ENCODE measurements at regions of chr2 and their contacts with region 1.

Region 1: DNA sequence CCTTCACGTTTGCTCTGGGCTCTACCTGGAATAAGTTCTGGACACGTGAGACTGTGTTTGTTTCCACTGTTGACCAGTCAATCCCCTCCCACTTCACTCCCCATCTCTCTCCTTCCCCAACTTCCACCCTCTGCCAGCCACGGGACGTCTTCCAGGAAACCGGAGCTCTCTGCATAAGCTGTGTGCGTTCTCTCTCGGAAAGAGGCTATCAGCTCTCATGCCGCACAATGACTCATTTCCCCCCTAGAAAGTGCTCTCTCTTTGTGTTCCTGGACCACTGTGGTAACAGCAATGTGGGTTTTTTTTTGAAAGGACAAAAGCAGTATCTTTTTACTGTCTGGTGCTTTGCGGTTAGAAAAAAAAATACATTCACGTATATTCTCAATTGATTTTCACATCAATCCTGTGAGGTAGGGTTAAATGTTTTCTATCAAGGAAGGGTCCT is 10.2 kb downstream of the PROKR1 start:
- DNase-seq: peak; percentile 56
- H3K4me3 Mint-ChIP-seq: peak overlapping the region; percentile 35
- H3K27ac Mint-ChIP-seq: peak overlapping the region; percentile 42
- H3K4me1 Mint-ChIP-seq: peaks cover 49% of the 10 kb centered on the region
- H3K27me3 Mint-ChIP-seq: peaks cover 37% of the 10 kb centered on the region

Region 2: GRCh38 chr2:68385220-68385906 is 268.2 kb before region 1 on chr2:
- intact Hi-C with region 1: loop called (anchors 5 kb)
- DNase-seq: no peak
- H3K4me3 Mint-ChIP-seq: no peak overlapping the region
- H3K27ac Mint-ChIP-seq: no peak overlapping the region
- H3K4me1 Mint-ChIP-seq: peaks cover 36% of the 10 kb centered on the region
- H3K27me3 Mint-ChIP-seq: peaks cover 18% of the 10 kb centered on the region

Region 3: GRCh38 chr2:68521037-68521436 is 132.5 kb before region 1 on chr2:
- intact Hi-C with region 1: loop called (anchors 1 kb)
- DNase-seq: no peak
- H3K4me3 Mint-ChIP-seq: no peak overlapping the region
- H3K27ac Mint-ChIP-seq: peak overlapping the region; percentile 27
- H3K4me1 Mint-ChIP-seq: peaks cover 22% of the 10 kb centered on the region
- H3K27me3 Mint-ChIP-seq: no peaks in the 10 kb centered on the region

Region 4: GRCh38 chr2:68689553-68690537 is 36.3 kb after region 1 on chr2:
- intact Hi-C with region 1: loop called (anchors 2 kb)
- DNase-seq: no peak
- H3K4me3 Mint-ChIP-seq: no peak overlapping the region
- H3K27ac Mint-ChIP-seq: peak overlapping the region; percentile 67
- H3K4me1 Mint-ChIP-seq: peaks cover 20% of the 10 kb centered on the region
- H3K27me3 Mint-ChIP-seq: peaks cover 14% of the 10 kb centered on the region

Region 5: GRCh38 chr2:68766376-68766845 is 112.9 kb after region 1 on chr2:
- intact Hi-C with region 1: loop called (anchors 5 kb)
- DNase-seq: peak; percentile 70
- H3K4me3 Mint-ChIP-seq: peak overlapping the region; percentile 68
- H3K27ac Mint-ChIP-seq: peak overlapping the region; percentile 93
- H3K4me1 Mint-ChIP-seq: peaks cover 91% of the 10 kb centered on the region
- H3K27me3 Mint-ChIP-seq: no peaks in the 10 kb centered on the region

Region 6: DNA sequence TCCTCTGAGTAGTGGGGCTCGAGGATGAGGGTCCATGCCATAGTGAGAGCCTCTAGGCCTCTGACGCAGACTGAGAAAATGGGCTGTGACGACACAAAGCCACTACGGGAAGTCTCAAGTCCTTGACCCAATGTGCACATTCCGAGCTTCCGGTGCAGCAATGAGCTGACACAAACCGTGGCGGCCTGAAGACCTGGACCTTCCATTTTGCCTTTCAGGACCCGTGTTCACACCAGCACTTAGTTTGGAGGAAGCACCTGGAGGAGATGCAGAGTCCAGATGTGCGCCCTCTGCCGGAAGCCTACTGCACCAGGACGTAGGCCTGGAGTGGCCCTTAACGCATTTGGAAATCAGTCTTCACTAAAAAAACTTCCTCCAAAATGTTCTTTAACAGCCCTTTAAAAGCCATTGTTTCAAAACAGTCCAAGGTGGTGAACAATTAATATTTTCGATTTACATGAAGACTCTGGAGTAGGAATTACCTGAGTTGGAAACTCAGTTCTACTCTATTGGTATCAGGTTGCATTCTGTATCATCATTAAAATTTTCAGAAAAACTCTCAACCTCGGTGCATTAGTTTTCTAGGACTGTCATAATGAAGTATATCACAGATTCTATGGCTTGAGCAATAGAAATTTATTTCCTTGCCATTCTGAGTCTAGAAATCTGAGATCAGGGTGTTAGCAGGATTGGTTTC is 183.8 kb after region 1 on chr2:
- intact Hi-C with region 1: loop called (anchors 5 kb)
- DNase-seq: peak; percentile 43
- H3K4me3 Mint-ChIP-seq: no peak overlapping the region
- H3K27ac Mint-ChIP-seq: peak overlapping the region; percentile 78
- H3K4me1 Mint-ChIP-seq: peaks cover 49% of the 10 kb centered on the region
- H3K27me3 Mint-ChIP-seq: no peaks in the 10 kb centered on the region

Region 7: DNA sequence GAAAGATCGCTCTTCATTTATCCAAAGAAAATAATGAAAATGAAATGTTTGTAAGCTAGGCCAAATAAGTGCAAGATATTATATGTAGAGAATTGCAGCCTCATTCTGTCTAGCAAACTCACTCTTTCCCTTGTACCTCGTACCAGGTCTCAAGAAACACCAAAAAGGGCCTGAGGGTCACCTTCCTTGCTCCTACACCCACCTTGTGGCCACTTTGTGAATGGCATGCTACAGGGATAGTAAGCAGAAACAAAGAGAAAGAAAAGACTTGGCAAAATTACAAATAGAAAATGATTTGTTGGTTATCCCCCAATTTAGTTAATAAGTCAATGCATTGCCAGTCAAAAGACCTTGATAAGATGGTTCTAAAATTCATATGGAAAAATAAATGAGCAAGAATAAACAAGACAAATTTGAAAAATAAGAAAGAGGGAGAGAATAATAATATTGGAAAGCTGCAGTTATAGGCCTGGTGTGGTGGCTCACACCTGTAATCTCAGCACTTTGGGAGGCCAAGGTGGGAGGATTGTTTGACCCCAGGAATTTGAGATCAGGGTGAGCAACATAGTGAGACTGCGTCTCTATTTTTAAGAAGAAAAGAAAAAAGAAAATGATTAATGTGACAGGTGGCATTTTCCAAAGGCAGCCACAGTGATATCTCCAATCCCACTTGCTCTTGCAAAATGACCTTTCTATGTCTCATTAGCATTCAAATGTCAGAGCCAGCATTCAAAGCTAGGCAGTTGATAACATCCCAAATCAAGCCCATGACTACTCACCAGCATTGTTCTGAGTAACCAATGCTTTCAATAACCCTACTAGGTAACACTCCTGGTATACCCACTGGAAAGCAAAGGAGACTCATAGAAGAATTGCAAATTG is 256.5 kb after region 1 on chr2:
- intact Hi-C with region 1: loop called (anchors 5 kb)
- DNase-seq: peak; percentile 62
- H3K4me3 Mint-ChIP-seq: no peak overlapping the region
- H3K27ac Mint-ChIP-seq: peak overlapping the region; percentile 70
- H3K4me1 Mint-ChIP-seq: peaks cover 33% of the 10 kb centered on the region
- H3K27me3 Mint-ChIP-seq: no peaks in the 10 kb centered on the region

Measured in activated T-helper 2 cell treated with anti-CD3 and anti-CD28 coated beads, Interferon-gamma antibody, Interleukin-2, Interleukin-4, amounts not matched to agents 10 μg/mL and 5 μg/mL and 100 μg/mL, durations not matched to agents 14 hours and 24 hours and 36 hours (primary cell).